Tibial artery (tissue), 4 donors: ENCODE measurements at regions of chr1 and their contacts with region 1.

Region 1: DNA sequence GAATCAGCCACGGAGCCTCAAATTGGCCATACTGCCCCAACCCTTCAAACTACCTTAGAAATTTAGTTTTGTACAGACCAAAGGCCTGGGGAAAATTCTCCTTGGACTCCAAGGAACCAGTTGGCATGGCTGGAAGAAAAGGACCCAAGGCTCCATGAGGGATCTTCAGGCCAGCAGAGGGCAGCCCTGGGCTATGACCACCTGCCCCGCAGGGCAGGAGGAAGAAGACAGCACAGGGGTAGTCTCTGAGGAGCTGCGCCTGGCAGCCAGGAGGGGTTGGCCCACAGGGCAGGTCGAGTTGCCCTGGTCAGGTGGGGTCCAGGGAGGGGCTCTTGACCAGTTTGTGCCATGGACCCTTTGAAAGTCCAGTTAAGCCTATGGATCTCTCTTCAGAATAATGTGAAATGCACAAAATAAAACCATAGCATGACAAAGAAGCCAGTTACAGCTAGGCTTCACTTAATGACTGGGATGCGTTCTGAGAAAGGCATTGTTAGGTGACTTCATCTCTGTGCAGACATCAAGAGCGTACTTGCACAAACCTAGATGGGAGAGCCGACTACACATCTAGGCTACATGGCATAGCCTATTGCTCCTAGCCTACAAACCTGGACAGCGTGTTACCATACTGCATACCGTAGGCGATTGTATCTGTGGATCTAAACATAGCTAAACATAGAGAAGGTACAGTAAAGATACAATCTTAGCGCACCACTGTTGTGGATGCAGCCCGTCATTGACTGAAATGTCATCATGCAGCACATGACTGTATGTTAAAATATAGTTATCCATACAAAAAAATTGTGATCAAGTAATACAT is 26.1 kb downstream of the CACNA1S start:
- DNase-seq: peak in 1 of 2 donors; percentile 52
- H3K4me3 ChIP-seq: no peak overlapping the region
- H3K27ac ChIP-seq: no peak overlapping the region
- H3K4me1 ChIP-seq: no peaks in the 10 kb centered on the region
- H3K27me3 ChIP-seq: peaks cover 0 to 14% of the 10 kb centered on the region in 2 donors
- CTCF ChIP-seq: peak; percentile 52 to 53

Region 2: GRCh38 chr1:201028461-201028889 is 57.7 kb before region 1 on chr1:
- intact Hi-C with region 1: no loop called
- DNase-seq: peak in 1 of 2 donors; percentile 56
- H3K4me3 ChIP-seq: no peak overlapping the region
- H3K27ac ChIP-seq: peak overlapping the region; percentile 41 to 56
- H3K4me1 ChIP-seq: peaks cover 0 to 29% (median 6%) of the 10 kb centered on the region in 4 donors
- H3K27me3 ChIP-seq: no peaks in the 10 kb centered on the region
- CTCF ChIP-seq: no peak

Region 3: GRCh38 chr1:201114236-201115131 is 28.4 kb after region 1 on chr1:
- intact Hi-C with region 1: loop called (anchors 2 kb)
- DNase-seq: peak; percentile 86 to 92
- H3K4me3 ChIP-seq: peak overlapping the region; percentile 52 to 60
- H3K27ac ChIP-seq: peak overlapping the region; percentile 67 to 73
- H3K4me1 ChIP-seq: peaks cover 0 to 12% (median 6%) of the 10 kb centered on the region in 4 donors
- H3K27me3 ChIP-seq: peaks cover 0 to 4% of the 10 kb centered on the region in 2 donors
- CTCF ChIP-seq: peak; percentile 82 to 90

Region 4: DNA sequence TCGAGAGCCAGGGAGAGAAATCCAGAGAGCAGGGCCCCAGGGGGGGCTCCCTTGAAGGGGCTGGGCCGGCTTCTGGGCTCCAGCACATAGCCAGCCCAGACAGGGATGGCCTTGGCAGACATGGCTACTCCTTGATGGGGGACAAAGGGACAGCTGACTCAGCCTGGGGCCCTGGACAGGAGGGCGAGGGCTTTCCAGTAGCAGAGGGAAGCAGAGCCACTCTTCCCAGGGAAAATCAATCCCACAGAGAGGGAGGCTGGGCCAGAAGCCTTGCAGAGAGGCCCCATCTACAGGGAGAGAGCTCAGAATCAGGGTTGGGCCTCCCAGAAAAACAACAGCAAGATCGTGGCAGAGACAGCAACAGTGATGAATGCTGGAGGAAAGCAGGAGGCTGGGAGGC is 120.0 kb after region 1 on chr1:
- intact Hi-C with region 1: loop called (anchors 5 kb)
- DNase-seq: no peak
- H3K4me3 ChIP-seq: no peak overlapping the region
- H3K27ac ChIP-seq: no peak overlapping the region
- H3K4me1 ChIP-seq: no peaks in the 10 kb centered on the region
- H3K27me3 ChIP-seq: no peaks in the 10 kb centered on the region
- CTCF ChIP-seq: no peak